Heart left ventricle (tissue), 16 donors: ENCODE measurements at regions of chr11 and their contacts with region 1.

Region 1: GRCh38 chr11:95163106-95163505 is 67.9 kb downstream of the SESN3 start:
- DNase-seq: no peak
- ATAC-seq: no peak
- H3K4me3 ChIP-seq: no peak overlapping the region
- H3K27ac ChIP-seq: no peak overlapping the region
- H3K4me1 ChIP-seq: peaks cover 0 to under 1% (median 0%) of the 10 kb centered on the region in 12 donors
- H3K27me3 ChIP-seq: no peaks in the 10 kb centered on the region
- CTCF ChIP-seq: no peak
- POLR2A ChIP-seq: no peak

Region 2: DNA sequence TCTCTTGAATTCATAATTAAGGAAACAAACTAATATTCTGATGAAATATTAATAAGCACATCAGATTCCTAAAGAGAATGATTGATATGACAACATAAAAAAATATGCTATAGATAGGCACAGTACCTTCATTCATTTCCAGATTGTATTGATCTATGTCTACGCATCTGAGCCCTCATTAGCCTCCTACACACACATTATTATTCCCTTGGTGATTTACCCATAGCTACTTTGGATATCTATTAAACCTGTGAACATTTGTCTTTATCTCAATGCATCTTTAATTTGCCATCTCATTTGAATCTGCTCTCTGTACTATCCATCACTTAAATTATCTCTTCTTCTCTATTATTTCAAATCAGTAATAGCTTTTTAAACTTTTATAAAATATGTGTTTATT is 49.5 kb after region 1 on chr11:
- intact Hi-C with region 1: loop called in 1 of 10 experiments (anchors 10 kb)
- DNase-seq: no peak
- ATAC-seq: no peak
- H3K4me3 ChIP-seq: no peak overlapping the region
- H3K27ac ChIP-seq: no peak overlapping the region
- H3K4me1 ChIP-seq: peaks cover 0 to 2% (median 0%) of the 10 kb centered on the region in 12 donors
- H3K27me3 ChIP-seq: no peaks in the 10 kb centered on the region
- CTCF ChIP-seq: no peak
- POLR2A ChIP-seq: no peak

Region 3: DNA sequence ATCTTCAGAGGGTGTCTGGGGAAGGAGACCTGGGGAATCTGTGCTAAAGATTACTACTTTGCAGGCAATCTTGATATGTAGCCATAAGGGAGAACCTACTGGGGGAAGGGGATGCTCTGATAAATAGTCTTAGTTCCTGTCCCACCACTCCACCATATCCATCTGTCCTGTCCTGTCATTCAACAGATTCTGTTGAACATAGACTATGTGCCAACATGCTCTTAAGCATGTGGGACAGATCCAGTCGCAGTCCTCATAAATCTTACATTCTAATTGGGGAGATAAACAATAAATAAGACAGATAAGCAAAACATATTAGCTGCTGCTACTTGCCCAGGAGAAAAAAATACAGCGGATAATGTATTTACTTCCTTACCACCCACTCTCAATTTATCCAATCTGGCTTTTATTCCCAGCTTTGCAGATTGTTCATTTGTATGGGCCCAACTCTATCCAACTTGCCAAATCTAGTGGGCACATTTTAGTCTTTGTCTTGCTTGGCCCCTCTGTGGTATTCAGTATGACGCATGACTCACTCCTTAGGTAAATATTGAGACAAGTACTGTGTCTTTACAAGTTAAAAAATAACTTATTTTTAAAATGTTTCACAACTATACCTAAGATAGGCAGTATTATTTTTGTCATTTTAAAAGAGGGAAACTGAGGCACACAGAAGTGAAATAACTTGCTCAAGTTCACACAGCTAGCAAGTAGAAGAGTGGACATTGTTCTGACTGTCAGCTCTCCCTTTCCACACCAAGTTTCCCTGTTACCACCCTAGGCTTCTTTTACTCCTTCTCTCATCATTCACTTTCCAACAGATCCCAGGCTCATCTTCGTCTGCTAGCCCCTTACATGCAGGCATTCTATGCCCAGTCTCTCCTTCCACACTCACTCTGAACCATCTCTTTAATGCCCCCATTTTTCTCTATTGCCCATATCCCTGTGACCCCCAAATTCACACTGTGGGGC is 201.5 kb after region 1 on chr11:
- intact Hi-C with region 1: loop called in 1 of 10 experiments (anchors 10 kb)
- DNase-seq: no peak
- ATAC-seq: no peak
- H3K4me3 ChIP-seq: no peak overlapping the region
- H3K27ac ChIP-seq: no peak overlapping the region
- H3K4me1 ChIP-seq: peaks cover 0 to 18% (median 0%) of the 10 kb centered on the region in 12 donors
- H3K27me3 ChIP-seq: no peaks in the 10 kb centered on the region
- CTCF ChIP-seq: no peak
- POLR2A ChIP-seq: no peak